ENCODE measurements at regions of chr2 and their contacts with region 1.

Region 1: DNA sequence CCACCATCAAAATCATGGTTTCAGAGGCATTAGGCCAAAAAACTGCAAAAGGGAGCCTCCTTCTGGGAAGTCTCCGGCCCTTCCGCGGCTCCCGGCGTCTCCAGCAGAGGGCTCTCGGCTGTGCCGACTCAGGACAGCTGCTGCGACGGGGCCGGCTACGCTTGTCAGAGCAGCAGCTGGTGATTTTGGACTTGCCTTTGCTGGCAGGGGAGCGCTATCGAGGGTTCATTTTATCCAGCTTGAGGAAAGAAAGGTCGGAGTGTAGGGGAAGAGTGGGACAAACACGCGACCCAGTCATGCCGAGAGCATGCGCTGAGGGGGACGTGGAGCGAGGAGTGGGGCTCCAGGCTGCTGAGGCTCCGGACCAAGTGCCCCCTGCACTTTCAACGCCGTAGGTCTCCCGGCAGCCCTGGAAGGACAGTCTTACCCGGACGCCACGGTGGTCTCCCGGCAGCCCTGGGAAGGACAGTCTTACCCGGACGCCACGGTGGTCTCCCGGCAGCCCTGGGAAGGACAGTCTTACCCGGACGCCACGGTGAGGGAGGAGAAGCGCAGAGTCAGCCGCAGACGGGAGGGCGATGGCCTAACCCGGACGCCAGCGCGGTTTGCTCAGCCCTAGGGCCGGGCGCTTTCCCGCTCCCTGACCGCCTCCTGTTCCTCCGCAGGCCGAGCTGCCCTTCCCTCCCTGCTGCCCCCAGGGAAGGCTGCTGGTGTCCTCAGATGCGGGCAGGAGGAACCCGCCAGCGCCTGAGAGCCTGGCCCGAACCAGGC is 21.7 kb downstream of the DDX18 start:
- ATAC-seq: peak; percentile 88 to 97 (median 91)
- H3K4me3 ChIP-seq: peak overlapping the region; percentile 19 to 31 (median 21)
- H3K27ac ChIP-seq: peak overlapping the region in 1 of 2 donors; percentile 3
- H3K4me1 ChIP-seq: no peaks in the 10 kb centered on the region

Region 2: GRCh38 chr2:117980783-117981676 is 144.9 kb after region 1 on chr2:
- in situ Hi-C with region 1: loop called in 1 of 9 experiments (anchors 25 kb)
- ATAC-seq: peak in 5 of 8 experiments; percentile 51 to 79 (median 64)
- H3K4me3 ChIP-seq: no peak overlapping the region
- H3K27ac ChIP-seq: no peak overlapping the region
- H3K4me1 ChIP-seq: no peaks in the 10 kb centered on the region

Region 3: GRCh38 chr2:118003396-118003824 is 167.2 kb after region 1 on chr2:
- in situ Hi-C with region 1: loop called in 4 of 9 experiments (anchors 10 to 25 kb)
- ATAC-seq: peak; percentile 83 to 99 (median 94)
- H3K4me3 ChIP-seq: no peak overlapping the region
- H3K27ac ChIP-seq: no peak overlapping the region
- H3K4me1 ChIP-seq: no peaks in the 10 kb centered on the region